Activated CD8-positive, alpha-beta memory T cell treated with anti-CD3 and anti-CD28 coated beads, Interleukin-2, amount 10 ng/mL, durations not matched to agents 7 days and 5 days (primary cell): ENCODE measurements at regions of chr6 and their contacts with region 1.

Region 1: DNA sequence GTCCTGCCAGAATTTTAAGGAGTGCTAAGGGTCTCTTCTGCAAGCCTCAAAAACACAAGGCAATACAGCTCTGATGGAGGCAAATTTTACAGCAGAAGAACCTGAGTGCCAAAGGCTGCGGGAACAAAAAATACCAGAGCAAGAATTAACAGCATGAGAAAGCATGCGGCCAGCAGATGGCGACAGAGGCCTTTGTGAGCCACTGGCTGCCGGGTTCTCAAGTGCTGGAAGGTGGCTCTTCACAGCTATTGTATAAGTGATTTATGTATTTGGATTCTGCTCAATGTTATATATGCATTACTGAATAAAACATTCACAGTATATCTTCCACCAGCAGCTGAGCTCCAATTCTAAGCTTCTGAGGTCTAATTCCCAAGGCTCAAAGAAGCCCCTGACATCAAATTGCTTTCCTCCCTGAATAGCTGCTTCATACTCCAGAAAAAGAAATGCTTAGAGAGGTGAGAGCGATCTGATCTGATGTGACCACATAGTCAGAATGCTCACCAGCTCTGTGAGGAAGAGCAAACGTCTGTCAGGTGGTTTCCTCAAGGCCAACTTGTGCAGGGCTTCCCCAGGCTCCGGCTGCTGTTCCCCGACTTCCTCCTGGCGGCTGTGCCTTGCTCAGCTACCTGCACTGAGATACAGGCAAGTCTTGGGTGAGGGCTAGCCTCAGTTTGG is 58.6 kb downstream of the PPP1R3G start:
- DNase-seq: peak; percentile 87
- ATAC-seq: peak; percentile 86
- H3K4me3 Mint-ChIP-seq: no peak overlapping the region
- H3K27ac Mint-ChIP-seq: no peak overlapping the region
- H3K4me1 Mint-ChIP-seq: no peaks in the 10 kb centered on the region
- H3K27me3 Mint-ChIP-seq: no peaks in the 10 kb centered on the region

Region 2: DNA sequence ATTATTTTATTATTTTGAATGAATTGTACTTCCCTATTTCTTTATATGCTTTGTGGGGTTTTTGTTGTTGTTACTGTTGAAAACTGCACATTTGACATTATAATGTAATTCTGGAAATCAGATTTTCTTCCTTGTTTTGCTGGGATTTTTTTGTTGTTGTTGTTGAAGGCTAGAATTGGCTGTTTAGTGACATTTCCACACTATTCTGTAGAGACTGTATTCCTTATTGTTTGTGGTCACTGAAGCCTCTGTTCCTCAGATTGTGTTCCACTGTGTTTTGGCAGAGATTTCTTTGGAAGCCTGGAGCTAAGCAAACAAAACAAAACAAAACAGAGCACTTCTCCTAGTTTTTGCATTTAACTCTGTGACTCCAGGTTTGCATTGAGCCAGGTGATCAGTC is 314.7 kb before region 1 on chr6:
- CTCF ChIA-PET with region 1: no interaction called
- DNase-seq: no peak
- ATAC-seq: no peak
- H3K4me3 Mint-ChIP-seq: no peak overlapping the region
- H3K27ac Mint-ChIP-seq: no peak overlapping the region
- H3K4me1 Mint-ChIP-seq: no peaks in the 10 kb centered on the region
- H3K27me3 Mint-ChIP-seq: no peaks in the 10 kb centered on the region

Region 3: GRCh38 chr6:5159148-5159547 is 15.4 kb after region 1 on chr6:
- CTCF ChIA-PET with region 1: interaction called, 12 read pairs
- DNase-seq: no peak
- ATAC-seq: no peak
- H3K4me3 Mint-ChIP-seq: no peak overlapping the region
- H3K27ac Mint-ChIP-seq: no peak overlapping the region
- H3K4me1 Mint-ChIP-seq: peaks cover 6% of the 10 kb centered on the region
- H3K27me3 Mint-ChIP-seq: no peaks in the 10 kb centered on the region

Region 4: DNA sequence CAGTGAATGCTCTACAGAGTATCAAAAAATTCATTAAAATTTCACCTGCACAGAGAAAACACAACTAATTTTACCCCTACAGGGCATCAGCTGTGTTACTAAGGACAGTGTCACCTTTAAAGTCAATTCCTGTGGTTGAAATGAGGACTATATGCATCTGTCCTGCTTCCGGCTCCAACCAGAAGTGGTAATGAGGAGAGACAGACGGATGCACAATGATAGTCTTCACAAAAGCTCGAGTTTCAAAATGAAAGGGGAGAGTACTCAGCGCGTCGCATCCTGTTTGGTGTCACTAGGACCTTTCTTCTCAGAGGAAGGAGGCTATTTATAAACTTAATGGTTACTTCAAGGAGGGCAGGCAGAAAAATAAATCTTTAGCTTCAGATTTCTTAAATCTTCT is 30.5 kb after region 1 on chr6:
- CTCF ChIA-PET with region 1: interaction called, 33 read pairs
- DNase-seq: peak; percentile 89
- ATAC-seq: peak; percentile 99
- H3K4me3 Mint-ChIP-seq: peak overlapping the region; percentile 60
- H3K27ac Mint-ChIP-seq: peak overlapping the region; percentile 95
- H3K4me1 Mint-ChIP-seq: peaks cover 50% of the 10 kb centered on the region
- H3K27me3 Mint-ChIP-seq: no peaks in the 10 kb centered on the region

Region 5: GRCh38 chr6:5205877-5206850 is 62.4 kb after region 1 on chr6:
- CTCF ChIA-PET with region 1: interaction called, 14 read pairs
- DNase-seq: no peak
- ATAC-seq: no peak
- H3K4me3 Mint-ChIP-seq: no peak overlapping the region
- H3K27ac Mint-ChIP-seq: no peak overlapping the region
- H3K4me1 Mint-ChIP-seq: no peaks in the 10 kb centered on the region
- H3K27me3 Mint-ChIP-seq: no peaks in the 10 kb centered on the region

Region 6: DNA sequence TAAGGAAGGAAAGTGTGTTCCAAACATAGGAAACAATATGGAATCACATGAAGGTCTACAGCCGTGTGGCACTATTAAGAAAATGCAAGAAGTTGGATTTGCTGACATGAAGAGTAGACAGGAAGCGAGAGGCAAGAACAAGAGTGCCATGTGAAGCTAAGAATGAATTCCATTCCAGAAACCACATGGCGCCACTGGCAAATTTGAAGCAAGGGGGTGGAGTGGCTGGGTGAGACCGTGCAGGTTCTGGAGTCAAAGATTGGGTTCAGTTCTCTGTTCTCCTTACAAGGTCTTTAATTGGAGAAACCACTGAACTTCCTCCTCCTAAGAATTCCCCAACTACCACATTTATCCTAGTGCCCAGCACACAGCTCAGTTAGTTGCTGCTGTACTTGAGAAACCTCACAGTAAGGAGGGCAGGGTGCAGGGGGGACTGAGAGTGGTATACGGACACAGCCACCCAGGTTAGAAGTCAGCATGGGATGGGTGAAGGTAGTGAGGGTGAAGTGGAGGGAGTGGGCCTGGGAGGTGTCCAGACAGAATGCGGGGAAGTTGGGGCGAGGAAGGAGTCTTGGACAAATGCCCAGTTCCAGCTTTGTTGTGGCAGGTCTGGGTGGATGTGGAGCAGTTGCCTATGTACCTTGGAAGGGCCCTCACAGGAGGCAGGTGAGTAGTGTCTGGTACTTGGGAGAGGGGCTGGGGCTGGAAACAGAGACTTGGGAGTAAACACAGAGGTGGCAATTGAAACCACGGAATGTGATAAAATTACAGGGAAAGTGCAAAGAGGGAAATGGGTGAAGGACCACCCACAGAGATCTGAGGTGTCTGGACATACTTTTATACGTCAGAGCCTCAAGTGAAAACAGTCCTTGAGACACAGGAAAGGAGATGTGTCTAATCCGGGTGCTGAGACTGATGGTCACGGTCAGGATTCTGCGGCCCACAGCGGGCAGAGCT is 102.6 kb after region 1 on chr6:
- CTCF ChIA-PET with region 1: interaction called, 14 read pairs
- DNase-seq: no peak
- ATAC-seq: no peak
- H3K4me3 Mint-ChIP-seq: no peak overlapping the region
- H3K27ac Mint-ChIP-seq: no peak overlapping the region
- H3K4me1 Mint-ChIP-seq: peaks cover 5% of the 10 kb centered on the region
- H3K27me3 Mint-ChIP-seq: no peaks in the 10 kb centered on the region

Region 7: GRCh38 chr6:5379647-5380242 is 236.0 kb after region 1 on chr6:
- CTCF ChIA-PET with region 1: interaction called, 18 read pairs
- DNase-seq: peak; percentile 58
- ATAC-seq: no peak
- H3K4me3 Mint-ChIP-seq: no peak overlapping the region
- H3K27ac Mint-ChIP-seq: no peak overlapping the region
- H3K4me1 Mint-ChIP-seq: peaks cover 2% of the 10 kb centered on the region
- H3K27me3 Mint-ChIP-seq: no peaks in the 10 kb centered on the region

Region 8: GRCh38 chr6:5401845-5402738 is 258.3 kb after region 1 on chr6:
- CTCF ChIA-PET with region 1: interaction called, 13 read pairs
- DNase-seq: no peak
- ATAC-seq: no peak
- H3K4me3 Mint-ChIP-seq: no peak overlapping the region
- H3K27ac Mint-ChIP-seq: no peak overlapping the region
- H3K4me1 Mint-ChIP-seq: peaks cover 15% of the 10 kb centered on the region
- H3K27me3 Mint-ChIP-seq: no peaks in the 10 kb centered on the region